PC-9 (cell line): ENCODE measurements at regions of chr17 and their contacts with region 1.

Region 1: GRCh38 chr17:50853015-50853615 is 13.0 kb downstream of the TOB1 start:
- DNase-seq: no peak
- H3K4me3 ChIP-seq: no peak overlapping the region
- H3K27ac ChIP-seq: no peak overlapping the region
- H3K4me1 ChIP-seq: peaks cover 11% of the 10 kb centered on the region
- H3K27me3 ChIP-seq: no peaks in the 10 kb centered on the region
- CTCF ChIP-seq: no peak

Region 2: GRCh38 chr17:50493744-50494143 is 359.4 kb before region 1 on chr17:
- CTCF ChIA-PET with region 1: no interaction called
- POLR2A ChIA-PET with region 1: interaction called, 27 read pairs
- intact Hi-C with region 1: no loop called
- DNase-seq: no peak
- H3K4me3 ChIP-seq: no peak overlapping the region
- H3K27ac ChIP-seq: peak overlapping the region; percentile 7; the same call in 1 of the 2 replicates
- H3K4me1 ChIP-seq: peaks cover 27% of the 10 kb centered on the region
- H3K27me3 ChIP-seq: no peaks in the 10 kb centered on the region
- CTCF ChIP-seq: no peak

Region 3: GRCh38 chr17:50938821-50939541 is 85.9 kb after region 1 on chr17:
- CTCF ChIA-PET with region 1: interaction called, 13 read pairs
- POLR2A ChIA-PET with region 1: no interaction called
- intact Hi-C with region 1: no loop called
- DNase-seq: peak in 1 of 2 experiments; percentile 31
- H3K4me3 ChIP-seq: no peak overlapping the region
- H3K27ac ChIP-seq: no peak overlapping the region
- H3K4me1 ChIP-seq: peaks cover 45% of the 10 kb centered on the region
- H3K27me3 ChIP-seq: no peaks in the 10 kb centered on the region
- CTCF ChIP-seq: no peak

Region 4: DNA sequence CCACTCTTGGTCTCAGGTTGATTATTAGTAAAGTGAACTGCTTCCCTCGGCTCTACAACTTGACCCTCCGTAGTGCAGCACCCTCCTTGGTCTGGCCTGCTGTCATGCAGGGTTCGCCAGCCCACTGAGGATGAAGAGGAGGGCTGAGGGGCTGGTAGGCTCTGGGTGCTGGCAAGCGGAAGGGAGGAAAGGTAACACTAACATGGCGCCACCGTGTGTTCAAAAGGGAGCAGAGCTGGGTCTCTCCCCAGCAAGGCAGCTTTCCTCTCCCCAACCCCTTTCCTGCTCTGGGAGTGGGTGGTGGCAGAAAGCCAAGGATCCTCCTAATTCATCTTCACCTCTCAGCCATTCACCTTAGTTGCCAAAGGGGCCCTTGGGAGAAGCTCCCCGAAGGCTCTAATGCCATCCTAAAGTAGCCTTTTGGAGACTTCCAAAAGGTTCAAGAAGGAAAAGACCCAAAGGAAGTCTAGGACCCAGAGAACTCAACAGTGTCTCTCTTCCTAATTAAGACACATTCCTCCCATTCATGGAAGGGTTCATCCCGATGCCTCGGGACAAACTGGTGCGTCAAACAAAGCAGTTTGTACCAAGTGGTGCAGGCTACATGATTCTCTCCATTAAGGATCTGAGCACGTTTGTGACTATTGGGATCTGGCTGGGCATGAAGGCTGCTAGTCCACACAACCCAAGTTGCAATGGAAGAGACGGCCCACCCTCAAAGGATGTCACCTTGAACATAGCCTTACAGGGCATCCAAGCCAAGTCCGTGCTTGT is 103.8 kb after region 1 on chr17:
- CTCF ChIA-PET with region 1: interaction called, 15 read pairs
- POLR2A ChIA-PET with region 1: no interaction called
- intact Hi-C with region 1: no loop called
- DNase-seq: peak; percentile 39 to 58
- H3K4me3 ChIP-seq: no peak overlapping the region
- H3K27ac ChIP-seq: no peak overlapping the region
- H3K4me1 ChIP-seq: peaks cover 13% of the 10 kb centered on the region
- H3K27me3 ChIP-seq: no peaks in the 10 kb centered on the region
- CTCF ChIP-seq: peak; percentile 84

Region 5: GRCh38 chr17:51153210-51154072 is 300.3 kb after region 1 on chr17 and contains the start of gene NME1:
- CTCF ChIA-PET with region 1: no interaction called
- POLR2A ChIA-PET with region 1: no interaction called
- intact Hi-C with region 1: loop called (anchors 2 kb)
- DNase-seq: peak; percentile 96 to 99
- H3K4me3 ChIP-seq: peak within 1 kb of the TSS; percentile 72
- H3K27ac ChIP-seq: peak within 1 kb of the TSS; percentile 78
- H3K4me1 ChIP-seq: peaks cover 22% of the 10 kb centered on the region
- H3K27me3 ChIP-seq: no peaks in the 10 kb centered on the region
- CTCF ChIP-seq: peak; percentile 86
- total RNA-seq, gene NME1: 115 and 172 TPM in 2 replicates